ENCODE measurements at regions of chr1 and their contacts with region 1.

Region 1: DNA sequence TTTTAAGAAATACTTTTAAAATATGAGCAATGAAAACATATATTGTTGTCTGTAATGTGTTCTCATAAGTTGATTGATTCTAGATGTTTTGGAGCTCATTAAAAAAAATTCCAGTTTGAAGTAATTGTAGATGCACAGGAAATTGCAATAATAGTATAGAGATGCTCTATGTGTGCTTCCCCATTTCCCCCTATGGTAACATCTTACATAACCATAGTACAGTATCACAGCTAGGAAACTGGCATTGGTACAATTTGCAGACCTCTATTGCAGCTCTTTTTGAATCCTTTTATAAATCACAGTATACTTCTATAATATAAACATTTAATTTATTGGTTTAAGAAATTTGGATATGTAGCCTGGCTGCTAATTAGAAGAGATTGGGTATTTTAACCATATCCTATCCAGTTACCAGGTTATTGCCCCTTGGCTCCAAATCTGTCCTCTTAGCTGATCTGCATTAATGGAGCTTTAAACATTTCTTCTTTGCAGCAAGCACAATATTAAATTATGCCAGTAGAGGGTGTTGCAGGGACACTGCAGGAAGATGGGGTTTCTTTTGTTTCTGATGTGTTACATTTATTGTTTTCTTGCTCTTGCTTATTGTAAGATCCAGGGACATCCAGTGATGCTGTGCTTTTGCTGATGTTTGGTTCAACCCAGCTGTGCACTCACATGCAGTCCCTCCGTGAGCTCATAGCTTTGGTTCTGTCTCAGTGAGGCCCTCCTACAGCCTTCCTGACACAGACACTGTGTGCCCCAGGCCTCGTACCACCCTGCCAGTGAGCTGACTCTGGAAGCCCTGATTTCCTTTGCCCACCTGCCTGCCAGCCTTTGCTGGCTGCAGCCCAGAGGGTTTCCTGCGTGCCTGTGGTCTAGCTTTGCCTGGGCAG is 103.3 kb downstream of the RABGAP1L start:
- DNase-seq: peak in 6 of 9 donors; percentile 3 to 25 (median 14)
- ATAC-seq: peak; percentile 36
- H3K4me3 ChIP-seq: no peak overlapping the region
- H3K4me3 Mint-ChIP-seq: no peak overlapping the region
- H3K27ac ChIP-seq: no peak overlapping the region
- H3K27ac Mint-ChIP-seq: no peak overlapping the region
- H3K4me1 ChIP-seq: no peaks in the 10 kb centered on the region
- H3K4me1 Mint-ChIP-seq: peaks cover 0 to 2% (median 0%) of the 10 kb centered on the region in 7 donors
- H3K27me3 ChIP-seq: no peaks in the 10 kb centered on the region
- H3K27me3 Mint-ChIP-seq: no peaks in the 10 kb centered on the region

Region 2: DNA sequence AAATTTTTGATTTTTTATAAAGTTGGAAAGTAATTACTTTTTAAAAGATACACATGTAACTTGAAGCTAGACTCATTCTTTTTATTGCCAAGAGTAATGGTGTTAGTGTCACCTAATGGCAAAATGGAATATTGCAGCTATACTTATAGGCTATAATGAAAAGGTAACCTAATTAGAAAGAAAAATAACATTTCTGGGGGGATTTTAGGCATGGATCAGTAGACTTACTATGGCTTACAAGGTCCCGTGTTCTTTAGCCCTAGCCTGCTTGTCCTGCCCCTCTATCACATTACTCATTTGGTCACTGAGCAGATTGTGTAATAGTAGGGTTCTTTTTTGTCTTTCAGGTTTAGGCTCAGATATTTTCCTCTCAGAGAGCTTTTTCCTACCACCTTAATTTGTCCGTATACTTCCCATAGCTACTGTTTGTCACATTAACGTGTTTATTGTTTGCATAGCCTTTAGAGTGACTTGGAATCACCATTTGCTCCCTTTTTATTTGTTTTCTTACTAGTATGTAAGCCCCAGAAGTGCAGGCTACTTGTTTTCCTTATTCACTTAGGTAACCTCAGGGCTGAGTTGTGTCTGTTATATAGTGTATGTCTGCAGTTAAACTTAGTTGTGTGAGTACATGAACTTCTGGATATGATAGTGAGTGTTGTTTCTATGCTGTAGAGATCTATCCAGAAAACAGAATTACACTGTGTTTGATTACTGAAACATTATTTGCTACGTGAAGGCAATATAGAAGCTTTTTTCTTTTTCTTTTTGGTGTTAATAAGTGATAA is 44.6 kb before region 1 on chr1:
- CTCF ChIA-PET with region 1: no interaction called
- POLR2A ChIA-PET with region 1: no interaction called
- intact Hi-C with region 1: no loop called
- DNase-seq: peak in 6 of 9 donors; percentile 2 to 46 (median 34)
- ATAC-seq: peak; percentile 69
- H3K4me3 ChIP-seq: no peak overlapping the region
- H3K4me3 Mint-ChIP-seq: no peak overlapping the region
- H3K27ac ChIP-seq: no peak overlapping the region
- H3K27ac Mint-ChIP-seq: no peak overlapping the region
- H3K4me1 ChIP-seq: no peaks in the 10 kb centered on the region
- H3K4me1 Mint-ChIP-seq: peaks cover 0 to 8% (median 0%) of the 10 kb centered on the region in 7 donors
- H3K27me3 ChIP-seq: no peaks in the 10 kb centered on the region
- H3K27me3 Mint-ChIP-seq: no peaks in the 10 kb centered on the region

Region 3: DNA sequence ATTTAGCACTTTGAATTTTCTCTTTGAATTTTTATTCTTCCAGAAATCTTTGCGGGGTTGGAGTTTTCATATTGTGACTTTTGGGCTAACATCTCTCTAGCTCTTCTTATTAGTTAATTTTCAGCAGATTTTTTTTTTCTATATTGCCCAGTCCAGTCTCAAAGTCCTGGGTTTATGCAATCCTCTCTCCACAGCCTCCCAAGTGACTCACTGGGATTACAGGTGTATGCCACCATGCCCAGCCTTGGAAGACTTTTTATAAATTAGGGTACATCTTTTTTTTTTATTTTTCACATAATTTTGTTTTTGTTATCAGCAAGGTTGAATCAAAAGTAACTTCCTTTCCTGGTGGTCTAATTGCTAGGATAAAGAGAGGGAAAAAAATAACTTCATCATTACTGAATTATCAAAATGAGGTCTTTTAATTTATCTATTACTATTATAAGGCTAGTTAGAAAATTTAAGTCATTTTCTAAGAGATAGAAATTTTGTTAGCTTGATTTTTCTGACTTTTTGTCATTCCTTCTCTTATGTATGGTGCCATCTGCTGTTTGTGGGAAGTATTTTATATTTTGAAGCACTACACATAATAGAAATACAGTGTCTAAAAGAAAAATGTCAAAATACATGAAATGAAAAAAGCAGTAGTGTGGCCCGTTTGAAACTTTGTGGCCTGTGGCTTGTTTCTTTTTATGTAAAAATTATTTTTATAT is 463.7 kb after region 1 on chr1:
- CTCF ChIA-PET with region 1: no interaction called
- POLR2A ChIA-PET with region 1: no interaction called
- intact Hi-C with region 1: loop called (anchors 1 kb)
- DNase-seq: peak in 1 of 9 donors; percentile 4
- ATAC-seq: no peak
- H3K4me3 ChIP-seq: no peak overlapping the region
- H3K4me3 Mint-ChIP-seq: no peak overlapping the region
- H3K27ac ChIP-seq: no peak overlapping the region
- H3K27ac Mint-ChIP-seq: no peak overlapping the region
- H3K4me1 ChIP-seq: no peaks in the 10 kb centered on the region
- H3K4me1 Mint-ChIP-seq: peaks cover 0 to 1% (median 0%) of the 10 kb centered on the region in 7 donors
- H3K27me3 ChIP-seq: no peaks in the 10 kb centered on the region
- H3K27me3 Mint-ChIP-seq: no peaks in the 10 kb centered on the region

Region 4: GRCh38 chr1:174743654-174744561 is 481.3 kb after region 1 on chr1:
- CTCF ChIA-PET with region 1: interaction called, 6 read pairs
- POLR2A ChIA-PET with region 1: no interaction called
- intact Hi-C with region 1: loop called (anchors 1 kb)
- DNase-seq: peak in 5 of 9 donors; percentile 29 to 53 (median 36)
- ATAC-seq: peak; percentile 47
- H3K4me3 ChIP-seq: no peak overlapping the region
- H3K4me3 Mint-ChIP-seq: no peak overlapping the region
- H3K27ac ChIP-seq: no peak overlapping the region
- H3K27ac Mint-ChIP-seq: no peak overlapping the region
- H3K4me1 ChIP-seq: no peaks in the 10 kb centered on the region
- H3K4me1 Mint-ChIP-seq: peaks cover 0 to 18% (median 13%) of the 10 kb centered on the region in 7 donors
- H3K27me3 ChIP-seq: no peaks in the 10 kb centered on the region
- H3K27me3 Mint-ChIP-seq: peaks cover 0 to 5% (median 0%) of the 10 kb centered on the region in 5 donors

Region 5: DNA sequence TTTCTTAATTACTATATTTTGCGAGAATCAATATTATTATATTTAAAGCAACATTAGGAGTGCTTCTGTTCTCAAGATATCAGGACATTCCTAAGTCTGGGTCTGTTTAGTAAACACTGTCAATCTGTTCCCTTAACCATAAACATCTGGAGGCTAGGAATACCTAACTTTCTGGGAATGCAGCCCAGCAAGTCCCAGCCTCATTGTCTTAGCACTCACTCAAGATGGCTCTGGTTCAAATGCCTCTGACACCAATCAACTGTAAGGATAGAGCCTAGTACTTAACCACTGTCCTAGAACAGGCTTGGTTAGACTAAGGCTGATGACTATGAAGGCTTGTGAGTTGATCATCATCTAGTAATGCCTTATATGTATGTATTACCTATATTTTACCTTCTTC is 866.6 kb after region 1 on chr1:
- CTCF ChIA-PET with region 1: interaction called, 3 read pairs
- POLR2A ChIA-PET with region 1: no interaction called
- intact Hi-C with region 1: loop called in 1 of 2 experiments (anchors 1 kb)
- DNase-seq: no peak
- ATAC-seq: no peak
- H3K4me3 ChIP-seq: no peak overlapping the region
- H3K4me3 Mint-ChIP-seq: no peak overlapping the region
- H3K27ac ChIP-seq: no peak overlapping the region
- H3K27ac Mint-ChIP-seq: no peak overlapping the region
- H3K4me1 ChIP-seq: no peaks in the 10 kb centered on the region
- H3K4me1 Mint-ChIP-seq: peaks cover 0 to 3% (median 0%) of the 10 kb centered on the region in 7 donors
- H3K27me3 ChIP-seq: no peaks in the 10 kb centered on the region
- H3K27me3 Mint-ChIP-seq: peaks cover 0 to 5% (median under 1%) of the 10 kb centered on the region in 5 donors

Measured in naive thymus-derived CD4-positive, alpha-beta T cell (primary cell).